Prostate gland (tissue), 2 donors: ENCODE measurements at regions of chr3 and their contacts with region 1.

Region 1: DNA sequence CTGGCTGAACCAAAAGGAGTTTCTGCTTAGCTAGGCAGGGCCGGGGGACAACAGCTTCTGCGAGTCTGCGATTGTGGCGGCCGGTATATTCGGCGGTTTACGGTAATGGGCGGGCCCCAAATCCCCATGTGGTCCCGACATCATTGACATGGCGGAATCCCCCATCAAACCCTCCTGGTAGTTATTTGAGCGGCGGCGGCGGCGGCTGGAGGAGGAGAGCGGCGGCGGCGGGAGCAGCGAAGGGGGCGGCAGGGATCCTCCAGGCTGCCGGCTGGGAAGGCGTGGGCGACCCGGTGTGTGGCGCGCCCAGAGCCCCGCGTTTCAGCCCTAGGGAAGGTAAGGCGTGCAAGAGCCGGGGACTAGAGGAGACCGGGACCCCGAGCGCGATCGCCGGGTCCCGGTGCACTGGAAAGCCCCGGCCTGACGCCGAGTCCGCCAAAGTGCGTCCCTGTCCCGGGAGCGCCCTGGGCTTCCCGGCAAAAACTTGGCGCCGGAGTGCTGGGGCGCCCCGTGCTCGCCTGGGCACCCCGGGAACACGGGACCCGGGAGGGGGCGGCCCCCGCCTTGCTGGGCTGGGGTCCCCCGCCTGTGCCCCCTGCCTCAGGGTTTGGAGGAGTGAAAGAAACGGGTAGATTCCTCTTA is at the start of gene FNDC3B:
- DNase-seq: peak; percentile 95
- H3K4me3 ChIP-seq: peak within 1 kb of the TSS; percentile 92 to 99
- H3K27ac ChIP-seq: peak within 1 kb of the TSS; percentile 97 to 98
- H3K4me1 ChIP-seq: no peaks in the 10 kb centered on the region
- H3K27me3 ChIP-seq: no peaks in the 10 kb centered on the region
- CTCF ChIP-seq: no peak
- POLR2A ChIP-seq: peak; percentile 95
- total RNA-seq, gene FNDC3B: 35.9 to 62.4 TPM

Region 2: GRCh38 chr3:171646357-171647133 is 393.0 kb before region 1 on chr3:
- intact Hi-C with region 1: loop called (anchors 10 kb)
- DNase-seq: no peak
- H3K4me3 ChIP-seq: no peak overlapping the region
- H3K27ac ChIP-seq: no peak overlapping the region
- H3K4me1 ChIP-seq: no peaks in the 10 kb centered on the region
- H3K27me3 ChIP-seq: no peaks in the 10 kb centered on the region
- CTCF ChIP-seq: peak in 3 of 4 experiments; percentile 53 to 76 (median 71)
- POLR2A ChIP-seq: no peak

Region 3: DNA sequence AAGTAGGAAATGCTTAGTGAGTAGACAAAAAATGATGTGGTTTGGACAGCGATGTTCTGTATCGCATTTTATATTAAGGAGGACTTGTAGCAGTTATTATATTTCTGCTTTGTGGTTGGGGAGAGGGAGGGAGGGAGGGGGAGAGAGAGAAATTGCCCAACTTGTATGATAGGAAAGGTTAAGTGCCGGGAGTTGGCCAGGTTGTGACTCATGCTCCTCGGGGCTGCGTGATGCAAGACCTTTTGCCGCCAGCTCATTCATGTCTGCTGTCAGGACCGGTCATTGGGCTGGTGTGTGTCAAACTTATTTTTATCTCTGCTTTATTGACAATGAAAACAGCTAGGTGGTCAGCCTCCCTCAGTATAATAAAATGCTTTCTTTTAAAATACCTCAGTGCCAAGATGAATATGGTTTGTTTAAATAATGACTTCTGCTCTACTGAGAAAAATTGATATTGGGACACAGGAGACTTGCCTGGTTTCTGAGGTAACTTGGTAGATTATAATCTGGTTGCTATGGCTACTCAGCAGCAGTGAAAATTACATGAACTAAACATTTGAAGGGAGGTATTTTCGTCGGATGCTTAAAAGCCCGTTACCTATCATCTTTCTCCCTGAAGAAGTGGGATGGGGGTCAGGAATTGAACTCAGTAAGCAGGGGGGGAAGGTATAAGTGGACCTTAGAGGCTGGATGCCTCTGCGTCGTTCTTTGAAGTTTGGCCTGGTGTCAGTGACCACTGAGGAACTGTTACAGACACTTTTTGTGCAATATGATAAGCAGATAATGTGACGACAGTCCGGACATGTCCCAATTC is 90.5 kb after region 1 on chr3:
- intact Hi-C with region 1: loop called (anchors 2 kb)
- DNase-seq: peak; percentile 79
- H3K4me3 ChIP-seq: no peak overlapping the region
- H3K27ac ChIP-seq: peak overlapping the region; percentile 49 to 64
- H3K4me1 ChIP-seq: peaks cover 12% of the 10 kb centered on the region
- H3K27me3 ChIP-seq: no peaks in the 10 kb centered on the region
- CTCF ChIP-seq: no peak
- POLR2A ChIP-seq: no peak

Region 4: DNA sequence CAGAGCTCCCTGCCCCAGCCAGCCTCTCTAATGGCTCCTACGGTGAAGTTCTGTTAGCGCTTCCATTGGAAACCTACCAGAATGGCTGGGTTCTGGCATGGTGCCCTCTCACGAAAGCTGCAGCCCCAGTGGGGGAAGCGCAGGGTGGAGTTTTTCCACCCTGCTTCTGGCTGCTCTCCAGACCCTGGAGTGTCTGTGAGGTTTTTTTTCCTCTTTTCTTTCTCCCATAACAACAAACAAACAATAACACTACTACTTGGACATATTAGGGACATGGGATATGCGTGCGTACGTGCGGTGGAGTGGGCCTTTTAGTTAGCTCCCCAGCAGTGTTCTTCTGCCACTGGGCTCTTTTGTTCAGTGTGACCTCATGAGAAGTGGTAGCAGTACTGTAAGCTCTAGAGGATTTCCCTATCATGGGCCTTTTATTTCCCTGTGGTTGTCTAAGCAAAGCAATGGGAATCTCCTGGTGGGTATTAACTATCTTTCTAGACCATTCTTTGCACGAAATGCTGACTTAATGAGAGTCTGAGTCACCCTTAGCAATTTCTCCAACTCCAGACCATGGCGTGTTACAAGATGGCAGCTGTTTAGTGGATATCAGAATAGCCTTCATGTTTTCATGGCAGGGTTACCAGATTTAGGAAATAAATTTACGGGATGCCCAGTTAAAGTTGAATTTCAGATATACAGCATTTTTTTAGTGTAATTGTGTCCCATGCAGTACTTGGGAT is 161.7 kb after region 1 on chr3:
- intact Hi-C with region 1: loop called (anchors 5 kb)
- DNase-seq: peak; percentile 24
- H3K4me3 ChIP-seq: no peak overlapping the region
- H3K27ac ChIP-seq: no peak overlapping the region
- H3K4me1 ChIP-seq: peaks cover 25% of the 10 kb centered on the region
- H3K27me3 ChIP-seq: no peaks in the 10 kb centered on the region
- CTCF ChIP-seq: no peak
- POLR2A ChIP-seq: no peak

Region 5: GRCh38 chr3:172256101-172256734 is 216.7 kb after region 1 on chr3:
- intact Hi-C with region 1: loop called (anchors 10 kb)
- DNase-seq: no peak
- H3K4me3 ChIP-seq: no peak overlapping the region
- H3K27ac ChIP-seq: peak overlapping the region; percentile 29 to 57
- H3K4me1 ChIP-seq: no peaks in the 10 kb centered on the region
- H3K27me3 ChIP-seq: no peaks in the 10 kb centered on the region
- CTCF ChIP-seq: no peak
- POLR2A ChIP-seq: no peak

Region 6: GRCh38 chr3:172332256-172333041 is 292.9 kb after region 1 on chr3:
- intact Hi-C with region 1: loop called (anchors 5 kb)
- DNase-seq: peak; percentile 67
- H3K4me3 ChIP-seq: no peak overlapping the region
- H3K27ac ChIP-seq: no peak overlapping the region
- H3K4me1 ChIP-seq: no peaks in the 10 kb centered on the region
- H3K27me3 ChIP-seq: no peaks in the 10 kb centered on the region
- CTCF ChIP-seq: peak; percentile 68 to 86 (median 77)
- POLR2A ChIP-seq: no peak